Activated CD4-positive, alpha-beta memory T cell treated with anti-CD3 and anti-CD28 coated beads for 36 hours (primary cell): ENCODE measurements at regions of chr17 and their contacts with region 1.

Region 1: DNA sequence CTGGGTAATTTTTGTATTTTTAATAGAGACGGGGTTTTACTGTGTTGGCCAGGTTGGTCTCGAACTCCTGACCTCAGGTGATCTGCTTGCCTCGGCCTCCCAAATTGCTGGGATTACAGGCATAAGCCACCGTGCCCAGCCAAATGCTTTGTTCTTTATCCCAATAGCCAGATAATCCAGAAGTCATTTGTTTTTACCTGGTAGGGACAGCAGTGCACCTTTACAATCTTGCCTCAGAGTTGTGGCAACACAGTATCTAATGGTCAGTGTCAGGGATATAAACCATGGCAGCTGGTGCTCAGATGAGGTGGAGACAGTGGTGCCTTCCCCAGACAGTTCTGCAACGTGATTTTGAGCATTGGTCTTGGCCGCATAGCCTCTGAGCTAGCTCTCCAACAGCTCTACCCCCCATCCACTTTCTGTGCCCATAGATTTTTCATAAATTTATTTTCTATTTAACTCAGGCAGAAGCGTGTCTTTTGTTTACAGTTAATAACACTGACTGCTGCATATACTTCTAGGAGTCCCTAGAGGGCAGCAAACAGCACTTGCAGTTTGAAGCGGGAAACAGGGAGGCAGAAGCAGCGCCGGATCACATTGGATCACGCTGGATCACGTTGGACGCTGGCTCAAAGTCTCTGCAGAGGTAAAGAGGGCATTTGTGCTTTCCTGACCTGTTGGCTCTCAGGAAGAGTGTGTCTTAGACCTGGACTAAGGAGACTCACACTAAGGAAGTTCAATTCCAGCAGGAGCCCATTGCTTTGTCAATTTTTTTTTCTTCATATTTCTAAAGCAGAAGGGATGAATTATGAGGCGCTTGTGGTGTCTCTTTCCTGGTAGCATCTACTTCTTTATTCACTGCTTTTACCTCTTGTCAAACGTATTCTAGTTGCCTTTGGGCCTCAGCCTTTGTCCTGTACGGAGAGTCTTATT is 5.1 kb upstream of the GGT6 start:
- DNase-seq: peak; percentile 72
- H3K4me3 Mint-ChIP-seq: no peak overlapping the region
- H3K27ac Mint-ChIP-seq: no peak overlapping the region
- H3K4me1 Mint-ChIP-seq: peaks cover 38% of the 10 kb centered on the region
- H3K27me3 Mint-ChIP-seq: no peaks in the 10 kb centered on the region

Region 2: DNA sequence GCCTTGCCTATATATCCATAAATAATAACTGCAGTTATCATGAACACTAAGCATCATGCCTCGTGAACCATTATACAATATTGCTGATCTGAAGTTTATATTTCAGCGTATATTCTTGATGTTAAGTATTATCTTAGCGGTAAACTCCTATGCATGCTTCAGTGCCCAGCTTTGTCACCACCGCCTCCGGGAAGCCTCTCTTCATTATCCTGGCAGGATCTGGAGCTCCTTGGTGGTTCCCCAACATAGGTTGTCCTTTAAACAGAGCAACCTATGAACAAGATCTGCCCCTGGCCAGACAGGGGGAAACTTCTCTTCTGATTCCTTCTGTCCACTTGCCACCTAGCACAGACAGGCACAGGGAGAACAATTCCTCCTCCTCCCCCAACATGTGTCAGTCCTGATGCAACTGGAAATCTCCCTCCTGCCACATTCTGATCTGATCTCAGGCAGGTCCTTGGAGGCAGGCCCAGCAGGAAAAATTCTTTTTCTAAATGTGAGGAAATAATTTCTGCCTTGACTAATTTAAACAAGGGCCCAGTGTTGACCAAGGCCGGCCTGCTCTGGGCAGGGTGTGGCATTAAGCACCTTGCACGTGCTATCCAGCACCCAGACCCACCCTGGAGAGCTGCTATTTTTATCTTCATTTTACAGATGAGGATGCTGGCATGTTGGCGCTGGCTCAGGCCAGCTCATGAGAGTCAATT is 44.4 kb before region 1 on chr17:
- CTCF ChIA-PET with region 1: no interaction called
- POLR2A ChIA-PET with region 1: no interaction called
- intact Hi-C with region 1: no loop called
- DNase-seq: no peak
- H3K4me3 Mint-ChIP-seq: no peak overlapping the region
- H3K27ac Mint-ChIP-seq: no peak overlapping the region
- H3K4me1 Mint-ChIP-seq: no peaks in the 10 kb centered on the region
- H3K27me3 Mint-ChIP-seq: peaks cover 2% of the 10 kb centered on the region

Region 3: GRCh38 chr17:4540224-4540641 is 25.2 kb before region 1 on chr17:
- CTCF ChIA-PET with region 1: no interaction called
- POLR2A ChIA-PET with region 1: no interaction called
- intact Hi-C with region 1: no loop called
- DNase-seq: no peak
- H3K4me3 Mint-ChIP-seq: no peak overlapping the region
- H3K27ac Mint-ChIP-seq: no peak overlapping the region
- H3K4me1 Mint-ChIP-seq: no peaks in the 10 kb centered on the region
- H3K27me3 Mint-ChIP-seq: no peaks in the 10 kb centered on the region

Region 4: GRCh38 chr17:4554997-4555799 is 10.3 kb before region 1 on chr17 and contains the start of gene MYBBP1A:
- CTCF ChIA-PET with region 1: interaction called, 54 read pairs
- POLR2A ChIA-PET with region 1: interaction called, 7 read pairs
- intact Hi-C with region 1: loop called (anchors 1 kb)
- DNase-seq: peak; percentile 98
- H3K4me3 Mint-ChIP-seq: peak within 1 kb of the TSS; percentile 95
- H3K27ac Mint-ChIP-seq: peak within 1 kb of the TSS; percentile 93
- H3K4me1 Mint-ChIP-seq: peaks cover 26% of the 10 kb centered on the region
- H3K27me3 Mint-ChIP-seq: no peaks in the 10 kb centered on the region
- total RNA-seq, gene MYBBP1A: 66.6 to 70.8 TPM

Region 5: GRCh38 chr17:4616476-4616875 is 51.0 kb after region 1 on chr17:
- CTCF ChIA-PET with region 1: interaction called, 20 read pairs
- POLR2A ChIA-PET with region 1: no interaction called
- intact Hi-C with region 1: no loop called
- DNase-seq: no peak
- H3K4me3 Mint-ChIP-seq: no peak overlapping the region
- H3K27ac Mint-ChIP-seq: no peak overlapping the region
- H3K4me1 Mint-ChIP-seq: no peaks in the 10 kb centered on the region
- H3K27me3 Mint-ChIP-seq: peaks cover 5% of the 10 kb centered on the region

Region 6: GRCh38 chr17:4696437-4696805 is 130.9 kb after region 1 on chr17:
- CTCF ChIA-PET with region 1: interaction called, 5 read pairs
- POLR2A ChIA-PET with region 1: no interaction called
- intact Hi-C with region 1: loop called (anchors 5 kb)
- DNase-seq: peak; percentile 52
- H3K4me3 Mint-ChIP-seq: peak overlapping the region; percentile 21
- H3K27ac Mint-ChIP-seq: peak overlapping the region; percentile 88
- H3K4me1 Mint-ChIP-seq: peaks cover 55% of the 10 kb centered on the region
- H3K27me3 Mint-ChIP-seq: no peaks in the 10 kb centered on the region

Region 7: DNA sequence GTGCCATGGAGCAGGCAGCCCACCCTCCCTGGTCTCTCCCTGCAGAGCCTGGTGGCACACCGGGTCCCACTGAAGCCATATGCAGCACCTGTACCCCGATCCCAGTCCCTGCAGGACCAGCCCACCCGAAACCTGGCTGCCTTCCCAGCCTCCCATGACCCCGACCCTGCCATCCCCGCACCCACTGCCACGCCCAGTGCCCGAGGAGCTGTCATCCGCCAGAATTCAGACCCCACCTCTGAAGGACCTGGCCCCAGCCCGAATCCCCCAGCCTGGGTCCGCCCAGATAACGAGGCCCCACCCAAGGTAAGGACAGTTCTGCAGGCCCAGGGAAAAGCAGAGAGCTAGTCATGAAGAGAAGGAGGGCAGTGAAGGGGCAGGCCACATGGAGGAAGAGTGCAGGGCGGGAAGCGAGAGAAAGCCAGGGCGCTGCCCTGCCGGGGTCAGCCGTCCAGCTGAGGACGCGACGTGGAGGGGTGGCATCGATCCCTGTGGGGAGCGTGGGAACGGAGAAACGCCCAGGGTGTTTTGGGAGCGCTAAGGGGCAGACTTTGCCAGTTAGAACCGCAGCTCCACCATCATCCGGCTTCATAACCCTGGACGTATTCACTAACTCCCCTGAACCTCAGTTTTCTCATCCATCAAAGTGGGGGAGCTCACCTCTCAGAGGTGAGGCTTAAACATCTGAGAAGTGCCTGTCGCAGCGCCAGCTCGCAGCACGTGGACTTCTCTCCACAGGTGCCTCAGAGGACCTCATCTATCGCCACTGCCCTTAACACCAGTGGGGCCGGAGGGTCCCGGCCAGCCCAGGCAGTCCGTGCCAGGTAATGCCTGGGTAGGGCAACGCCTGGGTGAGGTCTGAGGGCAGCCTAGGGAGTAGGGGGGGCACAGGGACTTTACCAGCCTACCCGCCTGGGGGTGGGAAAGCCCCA is 326.2 kb after region 1 on chr17:
- CTCF ChIA-PET with region 1: interaction called, 13 read pairs
- POLR2A ChIA-PET with region 1: no interaction called
- intact Hi-C with region 1: loop called (anchors 1 kb)
- DNase-seq: no peak
- H3K4me3 Mint-ChIP-seq: no peak overlapping the region
- H3K27ac Mint-ChIP-seq: no peak overlapping the region
- H3K4me1 Mint-ChIP-seq: no peaks in the 10 kb centered on the region
- H3K27me3 Mint-ChIP-seq: no peaks in the 10 kb centered on the region